GM12878 (cell line): ENCODE measurements at regions of chr1 and their contacts with region 1.

Region 1: DNA sequence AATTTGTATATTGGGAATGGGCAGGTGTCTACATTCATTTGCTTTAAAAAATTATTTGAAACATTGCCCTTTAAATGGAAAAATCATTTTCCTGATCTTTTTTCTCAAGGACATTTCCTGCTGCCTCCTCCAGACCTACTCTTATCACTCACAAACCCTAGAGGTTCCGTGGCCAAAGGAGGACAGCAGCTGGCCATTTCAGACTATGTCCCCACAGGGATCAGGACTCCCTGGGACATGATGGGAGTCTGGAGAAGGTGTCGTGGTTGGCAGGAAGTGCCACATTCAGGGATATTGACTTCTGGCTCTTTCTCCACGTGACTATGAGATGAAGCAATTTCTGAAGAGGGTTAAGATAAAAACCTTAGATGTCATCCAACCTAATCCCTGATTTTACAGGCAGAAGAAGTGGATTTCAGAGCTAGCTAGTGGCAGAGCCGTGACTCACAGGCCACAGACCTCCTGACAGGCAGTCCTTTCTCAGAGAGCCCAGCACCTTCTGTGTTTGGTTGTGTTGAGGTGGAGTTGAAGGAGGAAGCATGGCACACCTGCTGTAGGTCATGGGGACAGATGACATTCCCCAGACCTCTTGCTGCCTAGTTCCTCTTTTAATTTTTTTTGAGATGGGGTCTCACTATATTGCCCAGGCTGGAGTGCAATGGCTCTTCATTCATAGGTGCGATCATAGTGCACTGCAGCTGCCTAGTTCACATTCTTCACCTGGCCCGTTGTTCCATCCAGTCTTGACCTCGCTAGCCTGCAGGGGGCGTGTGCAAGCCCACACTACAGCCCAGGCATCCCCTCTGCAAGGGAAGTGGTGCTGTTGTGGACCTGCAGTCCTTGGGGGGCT is 25.5 kb upstream of the IL10 start:
- DNase-seq: no peak
- ATAC-seq: peak; percentile 31; the same call in 2 of the 3 replicates
- H3K4me3 ChIP-seq: no peak overlapping the region
- H3K27ac ChIP-seq: no peak overlapping the region
- H3K4me1 ChIP-seq: peaks cover 28% of the 10 kb centered on the region
- H3K27me3 ChIP-seq: no peaks in the 10 kb centered on the region
- CTCF ChIP-seq: peak; percentile 44 to 78 (median 73)
- EP300 ChIP-seq: no peak
- POLR2A ChIP-seq: no peak
- RAD21 ChIP-seq: peak; percentile 41

Region 2: GRCh38 chr1:206772243-206772937 is 25.4 kb before region 1 on chr1 and contains the start of gene IL10:
- CTCF ChIA-PET with region 1: interaction called, 299 read pairs
- POLR2A ChIA-PET with region 1: interaction called, 283 read pairs
- RAD21 ChIA-PET with region 1: interaction called, 363 read pairs
- SMC1A ChIA-PET with region 1: interaction called, 319 read pairs
- in situ Hi-C with region 1: no loop called
- intact Hi-C with region 1: no loop called
- DNase-seq: no peak
- ATAC-seq: no peak
- H3K4me3 ChIP-seq: peak within 1 kb of the TSS; percentile 74
- H3K27ac ChIP-seq: peak within 1 kb of the TSS; percentile 86
- H3K4me1 ChIP-seq: peaks cover 70% of the 10 kb centered on the region
- H3K27me3 ChIP-seq: no peaks in the 10 kb centered on the region
- CTCF ChIP-seq: no peak
- EP300 ChIP-seq: no peak
- POLR2A ChIP-seq: peak; percentile 46; the same call in 1 of the 2 replicates
- RAD21 ChIP-seq: no peak
- polyA plus RNA-seq, gene IL10: 1.2 to 1.6 TPM